Uterus (tissue), 4 donors: ENCODE measurements at regions of chr3 and their contacts with region 1.

Region 1: DNA sequence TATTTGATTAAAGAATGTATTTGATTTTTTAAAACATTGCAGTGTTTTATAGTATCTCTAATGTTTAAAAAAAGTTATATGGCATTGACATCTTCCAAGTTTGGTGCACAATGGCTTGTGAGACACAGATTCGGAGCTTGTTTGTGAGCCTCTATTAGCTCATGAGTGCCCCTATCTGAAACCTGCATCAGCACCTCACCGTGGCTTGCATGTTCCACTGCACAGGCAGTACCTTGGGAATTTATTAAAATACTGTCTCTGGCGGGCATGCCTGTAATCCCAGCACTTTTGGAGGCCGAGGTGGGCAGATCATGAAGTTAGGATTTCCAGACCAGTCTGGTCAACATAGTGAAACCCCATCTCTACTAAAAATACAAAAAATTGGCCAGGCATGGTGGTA is 6.8 kb upstream of the RTP2 start:
- DNase-seq: no peak
- H3K4me3 ChIP-seq: no peak overlapping the region
- H3K27ac ChIP-seq: no peak overlapping the region
- H3K4me1 ChIP-seq: no peaks in the 10 kb centered on the region
- H3K27me3 ChIP-seq: no peaks in the 10 kb centered on the region
- CTCF ChIP-seq: no peak
- POLR2A ChIP-seq: no peak

Region 2: DNA sequence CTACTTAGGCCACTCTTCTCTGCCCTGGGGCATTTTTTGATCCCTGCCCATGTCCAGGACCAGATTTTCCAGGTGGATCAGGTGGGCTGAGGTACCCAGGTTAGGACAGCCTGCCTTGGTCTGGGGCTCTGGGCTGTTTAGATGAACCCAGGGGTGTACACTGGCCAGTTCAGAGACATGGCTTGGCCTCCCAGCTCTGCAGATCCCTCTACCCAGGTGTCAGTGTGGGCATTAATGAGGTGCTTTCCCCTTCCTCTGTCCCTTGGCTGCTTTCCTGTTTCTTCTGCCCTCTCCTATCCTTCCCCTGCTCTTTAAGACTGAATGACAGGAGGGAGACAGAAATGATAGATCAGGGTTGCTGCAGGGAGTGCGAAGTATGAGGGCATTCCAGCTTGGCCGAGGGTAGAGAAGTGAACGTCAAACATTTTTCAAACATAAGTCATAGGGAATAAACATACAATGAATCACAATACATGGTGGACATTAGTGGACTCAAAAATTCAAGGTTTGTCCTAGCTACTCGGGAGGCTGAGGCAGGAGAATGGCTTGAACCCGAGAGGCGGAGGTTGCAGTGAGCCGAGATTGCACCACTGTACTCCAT is 481.4 kb before region 1 on chr3:
- intact Hi-C with region 1: loop called (anchors 10 kb)
- DNase-seq: no peak
- H3K4me3 ChIP-seq: no peak overlapping the region
- H3K27ac ChIP-seq: no peak overlapping the region
- H3K4me1 ChIP-seq: no peaks in the 10 kb centered on the region
- H3K27me3 ChIP-seq: no peaks in the 10 kb centered on the region
- CTCF ChIP-seq: no peak
- POLR2A ChIP-seq: no peak